ENCODE measurements at regions of chr10 and their contacts with region 1.

Region 1: DNA sequence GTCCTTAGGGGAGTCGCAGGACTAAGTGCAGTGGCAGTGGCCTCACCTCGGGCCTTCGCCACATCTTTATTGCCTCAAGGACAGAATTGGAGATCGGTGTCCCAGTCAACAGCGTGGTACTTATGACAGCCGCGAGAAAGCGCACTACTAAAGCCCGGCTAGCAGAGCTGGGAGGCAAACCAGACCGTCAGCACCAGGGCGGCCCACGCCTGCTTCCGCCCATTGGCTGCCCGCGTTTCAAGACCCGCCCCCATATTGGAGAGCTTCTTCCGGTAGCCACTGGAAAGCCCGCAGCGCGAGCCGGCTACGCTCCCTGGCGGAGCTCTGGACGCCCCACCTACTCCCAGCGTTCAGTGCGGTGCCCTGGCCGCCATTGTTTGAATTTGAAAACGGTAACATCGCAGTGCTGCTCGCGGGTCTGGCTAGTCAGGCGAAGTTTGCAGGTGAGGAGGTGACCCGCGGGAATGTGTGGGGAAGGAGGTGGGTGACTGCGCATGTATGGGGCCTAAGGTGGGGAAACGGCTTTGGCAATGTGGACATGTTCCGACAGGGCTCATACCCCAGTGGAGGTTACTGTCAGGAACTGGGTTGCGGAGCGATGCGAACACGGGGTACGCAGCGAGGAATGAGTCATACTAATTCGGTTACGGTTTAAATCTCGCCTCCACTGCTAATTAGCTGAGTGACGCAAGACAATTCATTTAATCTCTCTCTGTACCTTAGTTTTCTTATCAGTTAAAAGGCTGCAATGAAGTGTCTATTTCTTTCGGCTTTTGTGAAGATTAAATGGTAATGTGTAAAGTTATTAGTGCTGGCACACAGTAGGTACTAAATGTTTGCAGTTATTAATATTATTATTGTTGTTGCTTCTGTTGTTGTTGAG is at the start of gene KIF20B:
- DNase-seq: peak; percentile 95 to 97 (median 96)
- H3K4me3 ChIP-seq: peak within 1 kb of the TSS; percentile 74 to 99
- H3K4me3 Mint-ChIP-seq: peak within 1 kb of the TSS; percentile 97 to 99 (median 99)
- H3K27ac ChIP-seq: peak within 1 kb of the TSS; percentile 75
- H3K27ac Mint-ChIP-seq: peak within 1 kb of the TSS; percentile 97 to 99 (median 99)
- H3K4me1 ChIP-seq: peaks cover 35% of the 10 kb centered on the region
- H3K4me1 Mint-ChIP-seq: peaks cover 21 to 53% (median 33%) of the 10 kb centered on the region in 4 donors
- H3K27me3 ChIP-seq: no peaks in the 10 kb centered on the region
- H3K27me3 Mint-ChIP-seq: no peaks in the 10 kb centered on the region
- total RNA-seq, gene KIF20B: 20.7 to 21.4 TPM

Region 2: DNA sequence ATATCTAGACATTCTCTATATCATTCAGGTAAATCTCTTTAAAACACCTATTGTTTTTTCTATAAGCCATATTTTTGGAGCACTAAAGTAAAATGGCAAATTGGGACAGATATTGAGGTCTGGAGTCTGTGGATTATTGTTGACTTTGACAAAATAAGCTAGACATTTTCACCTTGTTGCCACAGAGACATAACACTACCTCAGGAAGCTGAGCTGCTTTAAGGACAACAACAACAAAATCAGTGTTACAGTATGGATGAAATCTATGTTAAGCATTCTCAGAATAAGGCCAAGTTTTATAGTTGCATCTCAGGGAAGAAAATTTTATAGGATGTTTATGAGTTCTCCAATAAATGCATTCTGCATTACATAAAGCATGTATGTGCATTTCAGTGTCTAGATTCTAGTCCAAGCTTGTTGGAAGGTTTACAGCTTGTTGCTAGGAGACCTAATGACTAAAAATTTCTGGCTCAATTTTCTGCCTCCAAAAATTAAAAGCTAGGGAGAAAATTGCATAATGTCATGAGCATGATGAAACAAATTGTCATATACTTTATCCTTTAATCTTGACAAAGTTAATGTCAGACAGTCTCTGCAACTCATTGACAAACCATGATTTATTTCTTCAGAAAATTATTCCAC is 880.6 kb before region 1 on chr10:
- CTCF ChIA-PET with region 1: no interaction called
- POLR2A ChIA-PET with region 1: no interaction called
- intact Hi-C with region 1: loop called (anchors 10 kb)
- DNase-seq: peak in 1 of 5 donors; percentile 28
- H3K4me3 ChIP-seq: no peak overlapping the region
- H3K4me3 Mint-ChIP-seq: peak overlapping the region in 2 of 8 donors; percentile 16 to 33
- H3K27ac ChIP-seq: no peak overlapping the region
- H3K27ac Mint-ChIP-seq: peak overlapping the region in 3 of 7 donors; percentile 6 to 61 (median 31)
- H3K4me1 ChIP-seq: peaks cover 35% of the 10 kb centered on the region
- H3K4me1 Mint-ChIP-seq: peaks cover 27 to 62% (median 47%) of the 10 kb centered on the region in 4 donors
- H3K27me3 ChIP-seq: no peaks in the 10 kb centered on the region
- H3K27me3 Mint-ChIP-seq: no peaks in the 10 kb centered on the region

Region 3: DNA sequence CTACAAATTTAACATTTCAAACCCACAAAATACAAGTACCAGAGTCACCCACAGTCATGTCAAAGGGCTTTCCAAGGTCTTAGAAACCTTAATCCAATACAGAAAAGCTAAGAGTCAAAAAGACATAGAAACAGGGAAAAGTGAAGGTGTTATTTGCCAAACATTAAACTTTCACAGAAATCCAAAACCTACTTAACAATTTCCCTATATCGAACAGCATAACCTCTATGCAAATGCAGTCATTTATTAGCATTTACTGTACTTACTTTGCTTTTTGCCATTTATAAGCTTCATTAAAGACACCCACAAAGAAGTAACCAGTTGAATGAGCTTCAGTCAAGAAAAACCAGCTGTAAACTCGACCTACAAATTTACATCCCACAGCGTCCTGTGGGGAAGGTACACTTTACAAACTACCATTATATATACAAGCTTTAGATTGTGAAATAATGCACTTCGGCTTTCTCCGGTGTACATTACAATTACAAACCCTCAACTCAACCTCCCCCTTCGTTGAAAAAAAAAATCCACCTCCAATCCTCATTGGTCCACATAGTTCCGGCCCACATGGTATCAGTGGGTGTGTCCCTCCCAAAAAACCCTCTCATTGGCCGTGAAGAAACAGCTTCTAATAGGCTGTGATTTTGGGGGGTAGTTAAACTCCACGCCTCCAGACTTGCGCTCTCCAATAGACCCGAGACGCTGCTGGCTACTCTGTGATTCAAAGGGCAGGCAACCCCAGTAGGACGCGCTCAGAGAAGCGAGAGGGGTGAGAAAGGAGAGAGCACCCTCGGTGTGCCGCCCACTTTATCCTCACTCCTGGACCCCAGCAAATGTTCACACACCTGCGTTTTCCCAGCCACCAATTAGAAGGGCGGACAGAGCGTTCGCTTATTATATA is 57.8 kb before region 1 on chr10:
- CTCF ChIA-PET with region 1: interaction called, 8 read pairs
- POLR2A ChIA-PET with region 1: interaction called, 13 read pairs
- intact Hi-C with region 1: loop called (anchors 1 kb)
- DNase-seq: peak; percentile 74 to 82 (median 75)
- H3K4me3 ChIP-seq: peak overlapping the region; percentile 55 to 75
- H3K4me3 Mint-ChIP-seq: no peak overlapping the region
- H3K27ac ChIP-seq: peak overlapping the region; percentile 43
- H3K27ac Mint-ChIP-seq: no peak overlapping the region
- H3K4me1 ChIP-seq: peaks cover 16% of the 10 kb centered on the region
- H3K4me1 Mint-ChIP-seq: peaks cover 8 to 11% (median 10%) of the 10 kb centered on the region in 4 donors
- H3K27me3 ChIP-seq: no peaks in the 10 kb centered on the region
- H3K27me3 Mint-ChIP-seq: peaks cover 3 to 4% of the 10 kb centered on the region in 2 donors

Region 4: GRCh38 chr10:89829887-89830269 is 128.4 kb after region 1 on chr10:
- CTCF ChIA-PET with region 1: no interaction called
- POLR2A ChIA-PET with region 1: no interaction called
- intact Hi-C with region 1: no loop called
- DNase-seq: no peak
- H3K4me3 ChIP-seq: no peak overlapping the region
- H3K4me3 Mint-ChIP-seq: no peak overlapping the region
- H3K27ac ChIP-seq: no peak overlapping the region
- H3K27ac Mint-ChIP-seq: no peak overlapping the region
- H3K4me1 ChIP-seq: no peaks in the 10 kb centered on the region
- H3K4me1 Mint-ChIP-seq: no peaks in the 10 kb centered on the region
- H3K27me3 ChIP-seq: no peaks in the 10 kb centered on the region
- H3K27me3 Mint-ChIP-seq: peaks cover 0 to 2% of the 10 kb centered on the region in 2 donors